ENCODE measurements at regions of chr3 and their contacts with region 1.

Region 1: GRCh38 chr3:9430733-9431132 is 33.3 kb downstream of the SETD5 start:
- DNase-seq: no peak
- ATAC-seq: no peak
- H3K4me3 ChIP-seq: no peak overlapping the region
- H3K27ac ChIP-seq: no peak overlapping the region
- H3K4me1 ChIP-seq: peaks cover 0 to 23% (median 3%) of the 10 kb centered on the region in 12 donors
- H3K27me3 ChIP-seq: no peaks in the 10 kb centered on the region
- CTCF ChIP-seq: no peak
- POLR2A ChIP-seq: no peak

Region 2: GRCh38 chr3:9387322-9387655 is 43.4 kb before region 1 on chr3:
- intact Hi-C with region 1: loop called in 5 of 10 experiments (anchors 5 kb)
- DNase-seq: no peak
- ATAC-seq: no peak
- H3K4me3 ChIP-seq: no peak overlapping the region
- H3K27ac ChIP-seq: no peak overlapping the region
- H3K4me1 ChIP-seq: peaks cover 0 to 22% (median 11%) of the 10 kb centered on the region in 12 donors
- H3K27me3 ChIP-seq: no peaks in the 10 kb centered on the region
- CTCF ChIP-seq: no peak
- POLR2A ChIP-seq: no peak

Region 3: GRCh38 chr3:9715764-9716437 is 285.2 kb after region 1 on chr3:
- intact Hi-C with region 1: no loop called
- DNase-seq: peak in 4 of 5 donors; percentile 70 to 77 (median 72)
- ATAC-seq: peak; percentile 56 to 97 (median 94)
- H3K4me3 ChIP-seq: no peak overlapping the region
- H3K27ac ChIP-seq: peak overlapping the region in 4 of 12 donors; percentile 39 to 75 (median 60)
- H3K4me1 ChIP-seq: peaks cover 0 to 21% (median 0%) of the 10 kb centered on the region in 12 donors
- H3K27me3 ChIP-seq: no peaks in the 10 kb centered on the region
- CTCF ChIP-seq: peak; percentile 38 to 75 (median 56)
- POLR2A ChIP-seq: no peak

Measured in heart left ventricle (tissue), 16 donors.